Activated T-helper 1 cell treated with anti-CD3 and anti-CD28 coated beads, Interleukin-12 subunit alpha, Interleukin-12 subunit beta, Interleukin-2, Interleukin-4 antibody, amounts not matched to agents 30 ng/mL and 10 ng/mL and 1 ng/mL, durations not matched to agents 14 hours and 24 hours and 36 hours (primary cell): ENCODE measurements at regions of chr2 and their contacts with region 1.

Region 1: GRCh38 chr2:113756355-113757137 is at the start of gene SLC35F5:
- DNase-seq: peak; percentile 95
- H3K4me3 Mint-ChIP-seq: peak within 1 kb of the TSS; percentile 91
- H3K27ac Mint-ChIP-seq: peak within 1 kb of the TSS; percentile 99
- H3K4me1 Mint-ChIP-seq: peaks cover 23% of the 10 kb centered on the region
- H3K27me3 Mint-ChIP-seq: no peaks in the 10 kb centered on the region
- total RNA-seq, gene SLC35F5: 29.0 and 30.4 TPM in 2 replicates

Region 2: GRCh38 chr2:113692698-113693428 is 63.7 kb before region 1 on chr2:
- intact Hi-C with region 1: loop called (anchors 1 kb)
- DNase-seq: peak; percentile 32
- H3K4me3 Mint-ChIP-seq: peak overlapping the region; percentile 74
- H3K27ac Mint-ChIP-seq: peak overlapping the region; percentile 96
- H3K4me1 Mint-ChIP-seq: peaks cover 33% of the 10 kb centered on the region
- H3K27me3 Mint-ChIP-seq: peaks cover 8% of the 10 kb centered on the region

Region 3: DNA sequence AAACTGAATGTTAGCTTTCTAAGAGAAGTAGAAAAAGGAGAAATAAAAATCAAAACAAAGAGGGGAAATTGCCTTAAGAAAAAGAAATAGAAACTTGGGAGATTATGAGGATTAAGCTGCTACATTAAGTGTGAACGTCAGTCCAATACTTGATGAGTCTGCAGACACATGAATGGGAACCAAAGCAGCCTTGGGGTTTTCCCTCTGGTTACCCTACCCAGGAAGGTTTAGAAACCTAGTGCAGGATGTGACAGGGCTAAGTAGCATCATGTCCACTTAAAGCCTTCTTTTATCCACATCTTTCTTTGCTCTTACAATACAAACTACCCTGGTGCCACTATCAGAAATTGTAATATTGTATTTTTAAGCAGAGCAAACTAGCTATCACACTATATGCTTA is 22.4 kb before region 1 on chr2:
- intact Hi-C with region 1: no loop called
- DNase-seq: no peak
- H3K4me3 Mint-ChIP-seq: no peak overlapping the region
- H3K27ac Mint-ChIP-seq: no peak overlapping the region
- H3K4me1 Mint-ChIP-seq: peaks cover 11% of the 10 kb centered on the region
- H3K27me3 Mint-ChIP-seq: no peaks in the 10 kb centered on the region

Region 4: GRCh38 chr2:113791697-113792590 is 35.4 kb after region 1 on chr2:
- intact Hi-C with region 1: loop called (anchors 1 kb)
- DNase-seq: no peak
- H3K4me3 Mint-ChIP-seq: peak overlapping the region; percentile 65
- H3K27ac Mint-ChIP-seq: peak overlapping the region; percentile 94
- H3K4me1 Mint-ChIP-seq: peaks cover 27% of the 10 kb centered on the region
- H3K27me3 Mint-ChIP-seq: no peaks in the 10 kb centered on the region

Region 5: DNA sequence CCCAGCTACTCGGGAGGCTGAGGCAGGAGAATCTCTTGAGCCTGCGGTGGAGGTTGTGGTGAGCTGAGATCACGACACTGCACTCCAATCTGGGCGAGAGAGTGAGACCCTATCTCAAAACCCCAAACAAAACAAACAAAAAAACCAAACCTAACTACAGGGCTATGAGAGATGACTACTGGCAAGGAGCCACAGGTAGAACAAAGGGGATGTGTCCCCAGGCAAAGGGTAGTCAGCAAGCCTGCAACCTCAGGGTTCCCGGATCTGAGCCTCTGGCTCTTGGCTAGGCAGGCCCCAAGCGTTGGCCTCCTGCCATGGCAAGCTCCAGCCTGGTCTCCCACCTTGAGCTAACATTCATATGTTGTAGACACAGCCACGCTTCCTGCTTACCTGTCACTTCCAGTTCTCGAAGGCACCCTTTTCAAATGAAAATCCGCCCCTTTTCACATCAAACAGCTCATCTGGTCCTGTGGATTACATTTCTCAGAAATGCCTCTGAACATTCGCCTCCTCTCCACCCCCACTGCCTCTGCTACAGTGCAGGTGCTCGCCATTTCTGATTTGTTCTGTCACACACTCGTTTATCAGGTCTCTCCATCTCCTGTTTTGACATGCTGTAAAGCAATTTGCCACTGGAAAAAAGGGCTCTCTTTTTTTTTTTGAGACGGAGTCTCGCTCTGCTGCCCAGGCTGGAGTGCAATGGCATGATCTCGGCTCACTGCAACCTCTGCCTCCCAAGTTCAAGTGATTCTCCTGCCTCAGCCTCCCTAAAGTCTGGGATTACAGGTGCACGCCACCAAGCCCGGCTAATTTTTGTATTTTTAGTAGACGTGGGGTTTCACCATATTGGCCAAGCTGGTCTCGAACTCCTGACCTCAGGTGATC is 120.2 kb after region 1 on chr2:
- intact Hi-C with region 1: loop called (anchors 2 kb)
- DNase-seq: peak; percentile 72
- H3K4me3 Mint-ChIP-seq: peak overlapping the region; percentile 10
- H3K27ac Mint-ChIP-seq: peak overlapping the region; percentile 81
- H3K4me1 Mint-ChIP-seq: peaks cover 60% of the 10 kb centered on the region
- H3K27me3 Mint-ChIP-seq: no peaks in the 10 kb centered on the region

Region 6: DNA sequence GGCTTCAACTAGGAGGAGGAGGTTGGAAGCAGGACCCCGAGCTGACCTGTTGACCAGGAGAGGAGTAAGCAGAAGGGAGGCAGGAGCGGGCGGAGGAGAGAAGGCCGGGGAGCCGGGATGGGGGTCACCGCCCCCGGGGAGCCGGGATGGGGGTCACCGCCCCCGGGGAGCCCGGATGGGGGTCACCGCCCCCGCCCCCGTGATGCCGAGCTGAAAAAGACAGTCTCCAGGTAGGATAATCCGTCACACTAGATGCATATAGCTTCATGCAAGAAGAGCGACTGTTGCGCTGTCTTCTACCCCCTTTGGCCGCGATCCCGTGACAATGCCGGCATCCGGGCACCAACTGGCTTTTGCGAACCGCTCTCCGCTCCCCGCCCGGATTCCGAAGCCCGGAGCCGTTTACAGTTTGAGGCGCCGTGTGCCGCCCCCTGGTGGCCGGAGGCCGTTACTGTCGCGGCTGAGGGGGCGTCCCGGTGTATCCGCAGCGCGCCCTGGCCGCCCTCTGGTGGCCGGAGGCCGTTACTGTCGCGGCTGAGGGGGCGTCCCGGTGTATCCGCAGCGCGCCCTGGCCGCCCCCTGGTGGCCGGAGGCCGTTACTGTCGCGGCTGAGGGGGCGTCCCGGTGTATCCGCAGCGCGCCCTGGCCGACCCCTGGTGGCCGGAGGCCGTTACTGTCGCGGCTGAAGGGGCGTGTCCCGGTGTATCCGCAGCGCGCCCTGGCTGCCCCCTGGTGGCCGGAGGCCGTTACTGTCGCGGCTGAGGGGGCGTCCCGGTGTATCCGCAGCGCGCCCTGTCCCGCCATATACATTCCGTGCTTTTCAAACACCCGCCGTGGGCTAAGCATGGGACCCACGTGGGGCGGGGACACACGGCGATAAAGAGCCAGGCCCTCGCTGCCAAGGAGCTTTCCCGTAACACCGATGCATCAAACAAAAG is 222.9 kb after region 1 on chr2:
- intact Hi-C with region 1: loop called (anchors 1 kb)
- DNase-seq: peak; percentile 48
- H3K4me3 Mint-ChIP-seq: no peak overlapping the region
- H3K27ac Mint-ChIP-seq: no peak overlapping the region
- H3K4me1 Mint-ChIP-seq: peaks cover 11% of the 10 kb centered on the region
- H3K27me3 Mint-ChIP-seq: no peaks in the 10 kb centered on the region